ENCODE measurements at regions of chr1 and their contacts with region 1.

Region 1: DNA sequence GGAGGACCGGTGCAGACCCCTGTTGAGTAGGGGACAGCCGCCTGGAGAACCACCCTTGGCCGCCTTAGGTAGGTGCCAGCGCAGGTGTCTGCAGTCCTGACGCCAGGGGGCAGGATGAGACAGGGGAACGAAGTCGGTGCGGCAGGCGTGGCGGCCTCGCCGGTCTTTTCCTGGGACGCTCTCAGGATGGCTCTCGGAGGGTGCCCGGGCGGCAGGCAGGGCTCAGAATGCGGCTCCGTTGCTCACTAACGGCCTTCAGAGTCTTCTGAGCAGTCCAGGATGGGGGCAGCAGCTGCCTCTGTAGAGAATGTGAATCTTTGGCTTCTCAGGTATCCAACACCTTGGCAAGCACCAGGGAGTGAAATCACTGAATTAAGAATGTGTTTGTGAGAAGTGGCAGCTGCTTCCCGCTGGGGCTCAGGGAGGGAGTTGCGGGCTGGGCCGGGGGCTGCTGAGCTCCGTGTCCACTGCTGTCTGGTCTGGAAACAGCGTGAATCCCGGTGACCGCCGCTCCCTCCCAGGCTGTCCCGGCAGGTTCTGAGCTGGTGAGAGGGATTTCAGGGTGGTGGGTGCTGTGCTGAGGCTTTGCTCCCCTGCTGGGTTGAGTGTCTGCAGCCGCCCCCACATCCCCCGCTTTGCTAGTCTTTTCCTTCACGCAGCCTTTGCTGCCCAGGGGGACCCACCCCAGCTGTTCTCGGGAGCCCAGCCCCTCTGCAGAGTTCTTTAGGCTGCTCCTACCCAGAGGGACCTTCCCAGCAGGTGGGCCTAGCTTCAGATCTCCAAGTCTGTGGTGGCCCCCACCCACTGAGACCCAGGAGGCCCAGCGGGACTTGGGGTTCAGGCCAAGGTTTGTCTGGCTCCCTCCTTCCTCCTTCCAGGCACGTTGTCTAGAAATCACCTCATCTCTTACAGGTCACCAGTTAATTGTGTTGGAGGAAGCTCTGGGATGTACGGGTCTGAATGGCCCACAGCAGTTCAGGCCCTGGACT is 11.1 kb upstream of the C1orf174 start:
- DNase-seq: peak; percentile 51 to 85 (median 79)
- ATAC-seq: peak; percentile 94
- H3K4me3 ChIP-seq: no peak overlapping the region
- H3K4me3 Mint-ChIP-seq: no peak overlapping the region
- H3K27ac ChIP-seq: no peak overlapping the region
- H3K27ac Mint-ChIP-seq: no peak overlapping the region
- H3K4me1 ChIP-seq: peaks cover 6% of the 10 kb centered on the region
- H3K4me1 Mint-ChIP-seq: peaks cover 2% of the 10 kb centered on the region
- H3K27me3 ChIP-seq: peaks cover 0 to 2% of the 10 kb centered on the region in 2 experiments
- H3K27me3 Mint-ChIP-seq: no peaks in the 10 kb centered on the region
- CTCF ChIP-seq: peak; percentile 75

Region 2: GRCh38 chr1:4034318-4034887 is 123.3 kb after region 1 on chr1:
- CTCF ChIA-PET with region 1: no interaction called
- POLR2A ChIA-PET with region 1: no interaction called
- intact Hi-C with region 1: no loop called
- DNase-seq: no peak
- ATAC-seq: no peak
- H3K4me3 ChIP-seq: no peak overlapping the region
- H3K4me3 Mint-ChIP-seq: no peak overlapping the region
- H3K27ac ChIP-seq: no peak overlapping the region
- H3K27ac Mint-ChIP-seq: no peak overlapping the region
- H3K4me1 ChIP-seq: no peaks in the 10 kb centered on the region
- H3K4me1 Mint-ChIP-seq: no peaks in the 10 kb centered on the region
- H3K27me3 ChIP-seq: no peaks in the 10 kb centered on the region
- H3K27me3 Mint-ChIP-seq: peaks cover 19% of the 10 kb centered on the region
- CTCF ChIP-seq: no peak

Region 3: DNA sequence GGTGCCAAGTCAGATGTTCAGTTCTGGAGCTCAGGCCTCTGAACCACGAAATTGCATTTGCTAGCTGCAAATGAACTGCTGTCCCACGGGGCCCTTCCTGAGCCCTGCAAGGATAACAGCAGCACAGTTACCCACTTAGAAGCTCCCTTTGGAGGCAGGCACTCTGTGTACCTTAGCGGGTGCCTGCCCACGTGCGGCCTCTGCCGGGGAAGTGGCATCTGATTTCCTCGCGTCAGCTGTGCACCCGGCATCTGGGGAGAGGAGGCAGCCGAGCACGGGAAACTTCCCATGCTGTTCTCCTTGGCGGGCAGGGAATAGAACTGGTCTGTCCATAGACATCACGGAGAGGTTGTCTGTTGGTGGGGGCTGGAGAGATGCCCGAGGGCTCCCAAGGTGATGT is 136.9 kb after region 1 on chr1:
- CTCF ChIA-PET with region 1: interaction called, 8 read pairs
- POLR2A ChIA-PET with region 1: no interaction called
- intact Hi-C with region 1: loop called in 1 of 2 experiments (anchors 5 kb)
- DNase-seq: no peak
- ATAC-seq: no peak
- H3K4me3 ChIP-seq: no peak overlapping the region
- H3K4me3 Mint-ChIP-seq: no peak overlapping the region
- H3K27ac ChIP-seq: no peak overlapping the region
- H3K27ac Mint-ChIP-seq: no peak overlapping the region
- H3K4me1 ChIP-seq: peaks cover 18% of the 10 kb centered on the region
- H3K4me1 Mint-ChIP-seq: peaks cover 21% of the 10 kb centered on the region
- H3K27me3 ChIP-seq: no peaks in the 10 kb centered on the region
- H3K27me3 Mint-ChIP-seq: peaks cover 3% of the 10 kb centered on the region
- CTCF ChIP-seq: no peak

Region 4: DNA sequence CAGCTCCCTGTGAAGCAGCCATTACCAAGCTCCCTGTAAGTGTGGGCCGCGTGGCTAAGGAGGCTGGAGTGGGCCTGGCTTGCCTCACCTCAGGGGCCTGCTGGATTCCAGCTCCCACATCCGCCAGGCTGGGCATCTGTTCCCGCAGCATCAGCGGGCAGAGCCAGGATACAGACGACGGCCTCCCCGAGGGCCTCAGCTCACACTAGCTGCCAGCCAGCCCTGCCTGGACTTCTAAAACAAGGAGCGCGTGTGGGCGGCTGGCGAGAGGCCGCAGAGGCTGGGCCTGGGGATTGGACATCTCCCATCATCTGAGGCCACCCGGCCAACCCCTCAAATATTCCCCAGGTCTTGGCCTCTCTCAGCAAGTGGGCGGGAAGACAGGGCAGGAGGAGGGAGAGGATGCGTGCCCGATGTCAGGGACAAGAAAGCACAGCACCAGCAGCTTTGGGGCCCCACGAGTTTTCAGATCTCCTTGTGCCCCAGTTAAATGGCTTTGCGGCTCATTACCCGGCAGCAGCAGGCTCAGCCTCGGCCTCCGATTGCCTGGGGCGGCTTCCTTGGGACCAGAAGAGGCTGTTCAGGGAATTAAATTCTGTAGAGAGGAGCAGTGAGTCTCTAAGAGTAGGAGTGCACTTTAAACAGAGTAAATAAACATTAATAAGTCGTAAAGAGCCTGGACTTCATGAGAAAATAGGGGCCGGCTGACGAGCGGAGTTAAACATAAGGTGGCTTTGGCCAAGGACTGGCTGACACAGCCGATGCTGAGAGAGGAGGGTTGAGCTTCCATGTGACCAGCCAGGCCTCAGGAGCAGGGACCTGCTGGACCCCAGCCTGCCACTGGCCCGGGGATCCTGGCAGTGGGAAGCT is 197.8 kb after region 1 on chr1:
- CTCF ChIA-PET with region 1: no interaction called
- POLR2A ChIA-PET with region 1: no interaction called
- intact Hi-C with region 1: no loop called
- DNase-seq: no peak
- ATAC-seq: no peak
- H3K4me3 ChIP-seq: no peak overlapping the region
- H3K4me3 Mint-ChIP-seq: no peak overlapping the region
- H3K27ac ChIP-seq: no peak overlapping the region
- H3K27ac Mint-ChIP-seq: no peak overlapping the region
- H3K4me1 ChIP-seq: no peaks in the 10 kb centered on the region
- H3K4me1 Mint-ChIP-seq: no peaks in the 10 kb centered on the region
- H3K27me3 ChIP-seq: no peaks in the 10 kb centered on the region
- H3K27me3 Mint-ChIP-seq: peaks cover 7% of the 10 kb centered on the region
- CTCF ChIP-seq: no peak

Region 5: GRCh38 chr1:4585216-4585615 is 674.1 kb after region 1 on chr1:
- CTCF ChIA-PET with region 1: no interaction called
- POLR2A ChIA-PET with region 1: no interaction called
- intact Hi-C with region 1: loop called in 1 of 2 experiments (anchors 10 kb)
- DNase-seq: peak in 7 of 9 experiments; percentile 18 to 56 (median 37)
- ATAC-seq: no peak
- H3K4me3 ChIP-seq: no peak overlapping the region
- H3K4me3 Mint-ChIP-seq: no peak overlapping the region
- H3K27ac ChIP-seq: no peak overlapping the region
- H3K27ac Mint-ChIP-seq: no peak overlapping the region
- H3K4me1 ChIP-seq: no peaks in the 10 kb centered on the region
- H3K4me1 Mint-ChIP-seq: no peaks in the 10 kb centered on the region
- H3K27me3 ChIP-seq: peaks cover 3 to 4% of the 10 kb centered on the region in 2 experiments
- H3K27me3 Mint-ChIP-seq: peaks cover 42% of the 10 kb centered on the region
- CTCF ChIP-seq: peak; percentile 68

Region 6: GRCh38 chr1:4825800-4826450 is 914.8 kb after region 1 on chr1:
- CTCF ChIA-PET with region 1: no interaction called
- POLR2A ChIA-PET with region 1: no interaction called
- intact Hi-C with region 1: loop called in 1 of 2 experiments (anchors 5 kb)
- DNase-seq: peak in 2 of 9 experiments; percentile 13 to 23
- ATAC-seq: no peak
- H3K4me3 ChIP-seq: no peak overlapping the region
- H3K4me3 Mint-ChIP-seq: no peak overlapping the region
- H3K27ac ChIP-seq: no peak overlapping the region
- H3K27ac Mint-ChIP-seq: no peak overlapping the region
- H3K4me1 ChIP-seq: no peaks in the 10 kb centered on the region
- H3K4me1 Mint-ChIP-seq: peaks cover 3% of the 10 kb centered on the region
- H3K27me3 ChIP-seq: no peaks in the 10 kb centered on the region
- H3K27me3 Mint-ChIP-seq: peaks cover 5% of the 10 kb centered on the region
- CTCF ChIP-seq: peak; percentile 34

Measured in CD8-positive, alpha-beta T cell (primary cell).